ENCODE measurements at regions of chr13 and their contacts with region 1.

Region 1: DNA sequence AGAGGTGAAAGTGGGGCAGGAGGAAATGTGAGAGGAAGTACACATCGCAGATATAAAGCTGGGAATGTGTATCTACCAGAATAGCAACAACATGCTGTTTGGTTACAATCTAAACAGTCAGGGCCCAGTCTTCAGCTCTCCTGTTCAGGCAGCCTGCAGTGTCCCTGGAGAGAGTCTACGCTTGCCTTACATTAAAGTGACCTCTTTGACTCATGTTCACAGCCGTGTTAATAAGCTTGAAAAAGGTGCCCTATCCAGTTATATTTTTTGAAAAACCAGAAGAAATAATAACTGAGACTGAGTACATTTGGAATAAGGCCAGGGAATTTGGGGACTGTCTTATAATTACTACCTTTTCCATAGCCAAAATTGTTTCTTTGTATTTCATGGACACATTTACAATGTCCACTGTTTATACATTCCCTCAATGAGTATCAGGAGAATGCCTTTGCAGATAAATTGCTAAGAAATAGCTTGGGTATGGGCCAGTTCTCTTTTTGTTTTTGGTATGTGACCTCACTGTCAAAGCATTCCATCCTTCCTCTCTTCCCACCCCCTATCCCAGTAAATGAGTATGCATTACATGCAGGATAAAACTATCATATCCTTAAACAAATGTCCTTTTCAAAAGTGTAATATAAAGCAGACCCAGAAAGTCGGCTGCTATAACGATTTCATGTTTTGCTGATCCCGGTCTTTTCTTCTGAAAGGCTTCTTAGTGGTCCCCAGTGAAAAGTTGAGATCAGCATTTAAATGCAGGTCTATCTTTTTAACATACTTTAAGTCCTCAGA is 82.6 kb downstream of the PCDH9 start:
- DNase-seq: no peak
- H3K4me3 ChIP-seq: no peak overlapping the region
- H3K27ac ChIP-seq: no peak overlapping the region
- H3K4me1 ChIP-seq: no peaks in the 10 kb centered on the region
- H3K27me3 ChIP-seq: no peaks in the 10 kb centered on the region
- CTCF ChIP-seq: no peak
- POLR2A ChIP-seq: no peak

Region 2: GRCh38 chr13:66353664-66354063 is 793.9 kb before region 1 on chr13:
- intact Hi-C with region 1: loop called (anchors 10 kb)
- DNase-seq: no peak
- H3K4me3 ChIP-seq: no peak overlapping the region
- H3K27ac ChIP-seq: no peak overlapping the region
- H3K4me1 ChIP-seq: no peaks in the 10 kb centered on the region
- H3K27me3 ChIP-seq: no peaks in the 10 kb centered on the region
- CTCF ChIP-seq: no peak
- POLR2A ChIP-seq: no peak

Region 3: GRCh38 chr13:67481445-67481844 is 333.9 kb after region 1 on chr13:
- intact Hi-C with region 1: no loop called
- DNase-seq: no peak
- H3K4me3 ChIP-seq: no peak overlapping the region
- H3K27ac ChIP-seq: no peak overlapping the region
- H3K4me1 ChIP-seq: no peaks in the 10 kb centered on the region
- H3K27me3 ChIP-seq: no peaks in the 10 kb centered on the region
- CTCF ChIP-seq: no peak
- POLR2A ChIP-seq: no peak

Measured in breast epithelium (tissue), 4 donors.